Esophagus squamous epithelium (tissue), 5 donors: ENCODE measurements at regions of chr11 and their contacts with region 1.

Region 1: GRCh38 chr11:22780952-22781593 is 48.5 kb downstream of the SVIP start:
- DNase-seq: no peak
- H3K4me3 ChIP-seq: no peak overlapping the region
- H3K27ac ChIP-seq: no peak overlapping the region
- H3K4me1 ChIP-seq: no peaks in the 10 kb centered on the region
- H3K27me3 ChIP-seq: no peaks in the 10 kb centered on the region
- CTCF ChIP-seq: no peak
- POLR2A ChIP-seq: no peak

Region 2: GRCh38 chr11:22337596-22338485 is 443.2 kb before region 1 on chr11 and contains the start of gene SLC17A6:
- intact Hi-C with region 1: loop called (anchors 5 kb)
- DNase-seq: no peak
- H3K4me3 ChIP-seq: no peak within 1 kb of the TSS
- H3K27ac ChIP-seq: no peak within 1 kb of the TSS
- H3K4me1 ChIP-seq: no peaks in the 10 kb centered on the region
- H3K27me3 ChIP-seq: peaks cover 0 to 61% (median 22%) of the 10 kb centered on the region in 4 donors
- CTCF ChIP-seq: no peak
- POLR2A ChIP-seq: no peak
- total RNA-seq, gene SLC17A6: not detected

Region 3: DNA sequence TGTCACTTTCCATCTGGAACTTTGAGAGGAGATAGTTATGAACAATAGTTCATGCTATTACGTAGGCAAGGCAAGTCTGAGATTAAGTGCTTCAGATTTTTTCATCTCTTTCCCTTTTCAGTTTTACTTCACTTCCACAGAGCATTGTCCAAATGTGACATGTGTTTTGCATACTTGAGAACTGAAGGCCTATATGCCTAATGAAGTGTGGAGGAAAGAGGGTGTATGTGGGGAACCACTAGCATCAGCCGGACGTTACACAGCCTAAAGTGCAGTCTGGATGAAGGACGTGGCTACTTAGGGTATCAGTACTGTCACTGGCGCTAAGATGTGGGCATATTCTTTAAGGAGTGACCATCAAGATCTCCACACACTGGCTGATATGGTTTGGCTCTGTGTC is 181.6 kb before region 1 on chr11:
- intact Hi-C with region 1: no loop called
- DNase-seq: no peak
- H3K4me3 ChIP-seq: no peak overlapping the region
- H3K27ac ChIP-seq: no peak overlapping the region
- H3K4me1 ChIP-seq: no peaks in the 10 kb centered on the region
- H3K27me3 ChIP-seq: no peaks in the 10 kb centered on the region
- CTCF ChIP-seq: no peak
- POLR2A ChIP-seq: no peak

Region 4: DNA sequence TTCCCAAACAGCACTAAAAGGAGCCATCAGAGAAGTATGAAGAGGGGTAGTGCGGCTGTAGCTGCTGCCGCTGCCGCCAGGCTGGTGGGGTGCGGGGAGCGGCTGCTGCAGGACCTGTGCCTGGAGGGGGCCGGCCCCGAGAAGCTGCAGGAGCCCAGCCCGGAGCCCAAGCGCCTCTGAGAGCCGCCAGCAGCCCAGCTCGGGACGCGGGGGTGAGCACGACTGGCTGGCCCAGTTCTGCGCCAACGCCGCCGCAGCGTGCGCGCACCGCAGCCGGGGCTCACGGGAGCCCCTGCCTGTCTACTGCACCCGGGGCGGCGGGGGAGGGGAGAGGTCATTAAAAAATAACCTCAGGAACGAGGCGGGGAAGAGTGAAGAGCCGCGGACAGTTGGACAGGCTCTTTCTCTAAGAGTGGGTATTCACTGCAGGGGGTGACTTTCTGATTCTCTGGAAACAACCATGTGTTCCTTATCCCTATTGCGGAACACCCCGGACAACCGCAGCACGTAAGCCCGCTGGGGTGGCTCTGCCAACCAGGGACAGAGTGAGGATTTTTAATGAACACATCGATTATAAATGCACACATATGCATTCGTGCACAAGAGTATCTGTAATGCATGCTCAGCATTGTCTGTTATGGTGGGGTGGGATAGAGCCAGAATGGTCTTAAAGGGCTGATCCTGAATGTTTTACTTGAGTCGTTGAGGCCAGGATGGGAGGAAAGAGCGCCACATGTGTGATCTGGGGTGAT is 114.2 kb before region 1 on chr11:
- intact Hi-C with region 1: no loop called
- DNase-seq: no peak
- H3K4me3 ChIP-seq: peak overlapping the region; percentile 23 to 63 (median 42)
- H3K27ac ChIP-seq: no peak overlapping the region
- H3K4me1 ChIP-seq: peaks cover 0 to 23% (median 11%) of the 10 kb centered on the region in 3 donors
- H3K27me3 ChIP-seq: peaks cover 0 to 49% (median 2%) of the 10 kb centered on the region in 4 donors
- CTCF ChIP-seq: no peak
- POLR2A ChIP-seq: no peak